Esophagus squamous epithelium (tissue), 5 donors: ENCODE measurements at regions of chr12 and their contacts with region 1.

Region 1: DNA sequence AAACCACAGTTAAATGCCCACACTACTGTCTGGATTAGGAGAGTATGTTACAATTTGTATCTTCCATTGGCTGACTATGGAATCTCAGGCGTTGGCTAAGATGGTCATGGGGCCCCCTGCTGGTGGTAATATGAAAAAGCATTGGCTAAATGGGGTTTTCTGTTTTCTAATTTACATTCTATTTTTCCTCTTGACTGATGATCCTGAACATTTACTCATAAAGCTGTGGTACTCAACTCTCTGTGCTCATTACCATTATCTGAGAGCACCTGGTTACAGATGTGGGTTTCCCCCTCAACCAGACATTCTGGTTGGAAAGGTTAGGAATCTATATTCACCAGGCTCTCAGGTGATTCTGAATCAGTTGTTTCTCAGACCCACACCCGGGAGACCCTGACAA is 64.8 kb downstream of the WSCD2 start:
- DNase-seq: no peak
- H3K4me3 ChIP-seq: no peak overlapping the region
- H3K27ac ChIP-seq: no peak overlapping the region
- H3K4me1 ChIP-seq: peaks cover 0 to 6% (median 3%) of the 10 kb centered on the region in 3 donors
- H3K27me3 ChIP-seq: no peaks in the 10 kb centered on the region
- CTCF ChIP-seq: peak; percentile 37 to 78 (median 68)
- POLR2A ChIP-seq: no peak

Region 2: GRCh38 chr12:107736914-107737313 is 457.0 kb before region 1 on chr12:
- intact Hi-C with region 1: no loop called
- DNase-seq: no peak
- H3K4me3 ChIP-seq: no peak overlapping the region
- H3K27ac ChIP-seq: no peak overlapping the region
- H3K4me1 ChIP-seq: peaks cover 0 to 3% (median 0%) of the 10 kb centered on the region in 3 donors
- H3K27me3 ChIP-seq: no peaks in the 10 kb centered on the region
- CTCF ChIP-seq: no peak
- POLR2A ChIP-seq: no peak

Region 3: DNA sequence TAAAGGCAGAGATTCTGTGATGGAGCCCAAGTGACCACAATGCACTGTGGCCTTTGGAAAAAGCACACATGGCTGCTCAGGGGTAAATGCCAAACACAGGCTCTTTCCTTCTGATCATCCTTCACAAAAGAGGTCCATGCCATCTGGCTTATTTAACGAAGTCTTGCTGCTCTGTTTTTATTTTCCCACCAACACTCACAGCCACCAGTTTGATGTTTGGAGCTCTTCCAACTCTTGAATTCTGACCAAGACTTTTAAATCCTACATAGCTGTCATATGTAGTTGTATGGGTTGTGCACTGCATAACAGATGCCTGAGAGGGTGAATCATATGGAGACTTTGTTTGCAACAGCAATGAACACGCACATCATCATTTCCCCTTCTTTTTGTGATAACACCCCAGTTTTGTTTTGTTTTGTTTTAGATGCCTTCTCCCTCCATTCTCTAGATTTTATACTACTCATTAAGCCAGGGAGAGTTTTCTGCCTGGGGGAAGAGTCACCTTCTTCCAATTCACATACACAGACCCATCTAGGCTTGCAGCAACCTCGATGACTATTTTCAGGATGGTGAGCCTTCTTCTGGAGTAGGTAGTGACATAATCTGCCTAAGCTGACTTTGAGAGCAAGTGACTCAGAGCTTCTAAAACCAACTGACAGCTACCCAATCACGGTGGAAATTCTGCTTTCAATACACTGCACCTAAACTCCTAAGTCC is 210.0 kb before region 1 on chr12:
- intact Hi-C with region 1: loop called (anchors 10 kb)
- DNase-seq: no peak
- H3K4me3 ChIP-seq: no peak overlapping the region
- H3K27ac ChIP-seq: no peak overlapping the region
- H3K4me1 ChIP-seq: no peaks in the 10 kb centered on the region
- H3K27me3 ChIP-seq: peaks cover 0 to 30% (median 0%) of the 10 kb centered on the region in 4 donors
- CTCF ChIP-seq: no peak
- POLR2A ChIP-seq: no peak

Region 4: DNA sequence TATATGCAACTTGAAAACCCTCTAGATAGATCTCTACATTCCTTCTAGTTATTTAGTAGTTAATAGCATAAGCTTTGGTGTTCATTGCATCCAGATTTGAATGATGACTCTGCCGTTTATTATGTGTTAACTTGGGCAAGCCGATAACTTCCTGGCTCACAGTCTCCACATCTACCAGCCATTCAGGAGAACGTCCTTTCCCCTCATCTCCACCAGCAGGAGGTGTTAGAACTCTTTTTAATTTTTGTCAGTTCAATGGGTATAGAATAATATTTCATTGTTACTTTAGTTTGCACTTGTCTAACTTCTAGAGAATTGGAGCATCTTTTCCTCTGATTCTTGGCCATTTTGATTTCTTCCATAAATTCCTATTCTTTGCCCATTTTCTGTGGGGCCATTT is 94.8 kb before region 1 on chr12:
- intact Hi-C with region 1: loop called (anchors 10 kb)
- DNase-seq: no peak
- H3K4me3 ChIP-seq: no peak overlapping the region
- H3K27ac ChIP-seq: no peak overlapping the region
- H3K4me1 ChIP-seq: peaks cover 0 to 5% (median 0%) of the 10 kb centered on the region in 3 donors
- H3K27me3 ChIP-seq: peaks cover 0 to 8% (median 0%) of the 10 kb centered on the region in 4 donors
- CTCF ChIP-seq: peak in 4 of 6 experiments; percentile 16 to 54 (median 42)
- POLR2A ChIP-seq: no peak

Region 5: GRCh38 chr12:108253540-108253939 is 59.6 kb after region 1 on chr12:
- intact Hi-C with region 1: no loop called
- DNase-seq: no peak
- H3K4me3 ChIP-seq: no peak overlapping the region
- H3K27ac ChIP-seq: no peak overlapping the region
- H3K4me1 ChIP-seq: no peaks in the 10 kb centered on the region
- H3K27me3 ChIP-seq: peaks cover 0 to 58% (median 0%) of the 10 kb centered on the region in 4 donors
- CTCF ChIP-seq: no peak
- POLR2A ChIP-seq: no peak